ENCODE measurements at regions of chr5 and their contacts with region 1.

Region 1: DNA sequence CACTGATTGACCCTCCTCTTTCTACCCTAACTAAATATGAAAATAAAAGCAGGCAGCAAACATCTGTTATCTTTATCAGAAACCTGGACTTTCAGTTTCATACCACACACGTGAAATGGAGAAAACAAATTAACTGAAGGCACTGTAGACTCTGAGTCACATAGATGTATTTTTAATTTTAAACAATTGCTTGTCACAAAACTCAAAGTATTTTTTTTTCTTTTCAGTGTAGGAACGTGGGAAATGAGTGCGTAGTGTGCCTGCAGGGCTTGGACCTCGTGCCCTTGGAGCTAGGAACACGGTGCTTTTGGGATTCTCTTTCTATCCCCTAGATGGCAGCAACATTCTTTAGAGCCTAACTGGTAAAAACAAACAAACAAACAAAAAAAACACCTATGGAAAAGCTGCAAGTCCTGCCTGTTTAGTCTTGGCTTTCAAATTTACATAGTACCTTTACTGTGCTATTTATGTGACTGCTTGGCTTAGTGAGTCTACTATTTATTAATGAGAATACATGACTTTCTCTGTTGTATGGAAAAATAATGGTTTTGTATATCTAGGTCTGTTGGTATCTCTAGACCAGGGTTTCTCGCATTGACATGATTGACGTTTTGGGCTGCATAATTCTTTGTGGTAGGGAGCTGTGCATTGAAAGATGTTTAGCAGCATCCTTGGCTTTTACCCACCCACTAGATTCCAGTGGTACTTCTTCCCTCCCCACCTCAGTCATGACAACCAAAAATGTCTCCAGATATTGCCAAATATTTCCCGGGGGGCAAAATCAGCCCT is 16.8 kb upstream of the ACTBL2 start:
- DNase-seq: peak; percentile 49 to 77 (median 64)
- H3K4me3 ChIP-seq: peak overlapping the region in 4 of 7 experiments; percentile 8 to 62 (median 28)
- H3K27ac ChIP-seq: no peak overlapping the region
- H3K4me1 ChIP-seq: peaks cover 20 to 75% (median 52%) of the 10 kb centered on the region in 4 experiments
- H3K27me3 ChIP-seq: no peaks in the 10 kb centered on the region

Region 2: GRCh38 chr5:57304931-57305330 is 194.5 kb before region 1 on chr5:
- CTCF ChIA-PET with region 1: no interaction called
- POLR2A ChIA-PET with region 1: no interaction called
- DNase-seq: no peak
- H3K4me3 ChIP-seq: no peak overlapping the region
- H3K27ac ChIP-seq: no peak overlapping the region
- H3K4me1 ChIP-seq: peaks cover 0 to 4% (median 0%) of the 10 kb centered on the region in 4 experiments
- H3K27me3 ChIP-seq: no peaks in the 10 kb centered on the region

Region 3: DNA sequence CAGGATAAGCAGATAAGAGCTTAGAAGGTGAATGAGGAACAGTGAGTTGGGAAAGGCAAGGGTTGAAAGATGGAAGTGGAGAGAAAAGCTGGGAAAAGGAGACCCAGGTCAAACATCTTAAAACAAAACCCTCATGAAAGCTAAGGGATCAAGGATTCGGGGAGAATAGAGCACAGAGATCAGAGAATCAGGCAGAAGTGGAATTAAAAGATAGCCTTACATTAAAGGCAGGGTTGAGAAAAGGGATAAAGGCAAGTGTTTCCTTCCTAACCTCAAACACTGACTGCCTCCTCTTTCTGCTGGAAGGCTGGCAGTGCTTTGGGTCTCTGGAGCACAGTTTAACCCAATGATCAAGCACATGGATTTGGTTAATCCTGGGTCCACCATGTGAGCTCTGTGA is 11.9 kb after region 1 on chr5:
- CTCF ChIA-PET with region 1: interaction called, 10 read pairs
- POLR2A ChIA-PET with region 1: no interaction called
- DNase-seq: no peak
- H3K4me3 ChIP-seq: no peak overlapping the region
- H3K27ac ChIP-seq: no peak overlapping the region
- H3K4me1 ChIP-seq: peaks cover 0 to 3% (median under 1%) of the 10 kb centered on the region in 4 experiments
- H3K27me3 ChIP-seq: no peaks in the 10 kb centered on the region

Region 4: GRCh38 chr5:57976506-57976905 is 477.1 kb after region 1 on chr5:
- CTCF ChIA-PET with region 1: no interaction called
- POLR2A ChIA-PET with region 1: no interaction called
- DNase-seq: no peak
- H3K4me3 ChIP-seq: no peak overlapping the region
- H3K27ac ChIP-seq: no peak overlapping the region
- H3K4me1 ChIP-seq: no peaks in the 10 kb centered on the region
- H3K27me3 ChIP-seq: no peaks in the 10 kb centered on the region

Measured in common myeloid progenitor, CD34-positive (primary cell).